Endothelial cell of umbilical vein (primary cell): ENCODE measurements at regions of chr18 and their contacts with region 1.

Region 1: GRCh38 chr18:33440060-33441043 is at the start of gene CCDC178:
- DNase-seq: peak; percentile 46
- H3K4me3 ChIP-seq: peak within 1 kb of the TSS; percentile 37 to 56 (median 45)
- H3K27ac ChIP-seq: no peak within 1 kb of the TSS
- H3K4me1 ChIP-seq: no peaks in the 10 kb centered on the region
- H3K27me3 ChIP-seq: peaks cover 8 to 38% of the 10 kb centered on the region in 2 experiments
- CTCF ChIP-seq: peak; percentile 25 to 59
- POLR2A ChIP-seq: no peak
- total RNA-seq, gene CCDC178: 0.80 and 1.3 TPM in 2 replicates

Region 2: DNA sequence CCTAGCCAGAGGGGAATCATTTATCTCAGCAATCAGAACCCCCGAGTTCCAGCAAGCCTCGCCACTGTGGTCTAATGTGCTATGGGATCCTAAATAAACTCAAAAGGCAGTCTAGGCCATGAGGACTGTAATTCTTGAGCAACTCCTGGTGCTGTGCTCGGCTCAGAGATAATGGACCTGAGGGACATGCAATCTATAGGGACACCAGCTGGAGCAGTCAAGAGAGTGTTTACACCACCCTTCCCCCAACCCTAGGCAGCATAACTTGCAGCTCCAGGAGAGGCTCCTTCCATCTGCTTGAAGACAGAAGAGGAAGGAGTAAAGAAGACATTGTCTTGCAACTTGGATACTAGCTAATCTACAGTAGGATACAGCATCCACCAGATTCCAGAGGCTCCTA is 442.1 kb before region 1 on chr18:
- CTCF ChIA-PET with region 1: no interaction called
- POLR2A ChIA-PET with region 1: no interaction called
- dilution Hi-C with region 1: no loop called
- intact Hi-C with region 1: no loop called
- DNase-seq: no peak
- H3K4me3 ChIP-seq: no peak overlapping the region
- H3K27ac ChIP-seq: no peak overlapping the region
- H3K4me1 ChIP-seq: no peaks in the 10 kb centered on the region
- H3K27me3 ChIP-seq: no peaks in the 10 kb centered on the region
- CTCF ChIP-seq: no peak
- POLR2A ChIP-seq: no peak

Region 3: DNA sequence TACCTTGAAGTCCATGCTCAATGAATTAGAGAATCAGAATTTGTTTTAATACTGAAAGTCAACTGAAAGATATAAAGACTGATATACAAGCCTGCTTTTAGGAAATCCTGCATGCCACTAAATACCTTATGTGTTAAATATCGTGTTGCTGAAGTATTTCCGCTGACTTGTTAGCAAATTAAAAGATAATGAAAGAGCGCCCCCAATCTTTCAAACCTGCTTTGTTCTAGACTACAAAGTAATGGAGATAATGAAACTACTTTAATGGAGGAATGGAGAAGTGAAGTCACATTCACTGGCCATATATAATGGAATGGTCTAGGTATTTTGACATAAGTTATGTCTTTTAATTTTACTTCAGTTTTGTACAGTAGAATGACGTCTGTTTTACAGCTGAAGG is 233.3 kb after region 1 on chr18:
- CTCF ChIA-PET with region 1: no interaction called
- POLR2A ChIA-PET with region 1: no interaction called
- dilution Hi-C with region 1: no loop called
- intact Hi-C with region 1: loop called (anchors 1 kb)
- DNase-seq: peak; percentile 30
- H3K4me3 ChIP-seq: no peak overlapping the region
- H3K27ac ChIP-seq: no peak overlapping the region
- H3K4me1 ChIP-seq: no peaks in the 10 kb centered on the region
- H3K27me3 ChIP-seq: no peaks in the 10 kb centered on the region
- CTCF ChIP-seq: no peak
- POLR2A ChIP-seq: no peak

Region 4: GRCh38 chr18:33761363-33761762 is 321.0 kb after region 1 on chr18:
- CTCF ChIA-PET with region 1: interaction called, 6 read pairs
- POLR2A ChIA-PET with region 1: no interaction called
- dilution Hi-C with region 1: no loop called
- intact Hi-C with region 1: loop called (anchors 1 kb)
- DNase-seq: peak; percentile 26
- H3K4me3 ChIP-seq: no peak overlapping the region
- H3K27ac ChIP-seq: no peak overlapping the region
- H3K4me1 ChIP-seq: no peaks in the 10 kb centered on the region
- H3K27me3 ChIP-seq: peaks cover 0 to 3% of the 10 kb centered on the region in 2 experiments
- CTCF ChIP-seq: peak in 1 of 2 donors; percentile 9
- POLR2A ChIP-seq: no peak